Calu3 (cell line): ENCODE measurements at regions of chr7 and their contacts with region 1.

Region 1: GRCh38 chr7:35185907-35186731 is 67.8 kb downstream of the TBX20 start:
- DNase-seq: peak; percentile 68
- H3K4me3 Mint-ChIP-seq: peak overlapping the region; percentile 91
- H3K27ac Mint-ChIP-seq: peak overlapping the region; percentile 22
- H3K4me1 Mint-ChIP-seq: peaks cover 27% of the 10 kb centered on the region
- H3K27me3 Mint-ChIP-seq: peaks cover 37% of the 10 kb centered on the region
- CTCF ChIP-seq: peak; percentile 48

Region 2: DNA sequence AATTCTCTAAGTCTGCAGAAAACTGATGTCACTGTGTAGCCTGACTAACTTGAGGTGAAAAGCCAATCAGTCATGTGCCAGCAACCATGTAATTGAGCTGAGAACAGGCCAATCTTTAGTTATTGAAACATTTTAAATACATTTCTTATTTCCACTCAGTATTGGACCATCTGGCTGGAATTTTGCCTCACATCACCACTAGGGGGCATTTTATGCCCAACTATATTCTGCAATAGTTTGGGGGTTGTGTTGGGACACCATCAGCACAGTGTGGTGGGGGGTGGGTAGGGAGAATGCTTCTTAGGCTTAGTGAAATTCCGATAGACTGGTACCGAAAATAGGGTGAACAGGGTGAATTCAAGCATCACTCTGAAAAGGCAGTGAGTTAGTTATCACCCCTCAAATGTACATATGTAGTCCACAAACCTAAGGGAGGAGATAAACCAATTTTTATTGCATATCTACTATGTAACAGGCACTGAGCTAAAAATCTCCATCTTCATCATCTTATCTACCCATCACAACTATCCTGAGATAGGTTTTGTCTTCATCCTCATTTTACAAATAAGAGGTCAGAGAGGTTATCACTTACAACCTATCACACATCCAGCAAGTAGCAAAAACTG is 510.3 kb before region 1 on chr7:
- CTCF ChIA-PET with region 1: no interaction called
- intact Hi-C with region 1: loop called (anchors 10 kb)
- DNase-seq: peak; percentile 66
- H3K4me3 Mint-ChIP-seq: no peak overlapping the region
- H3K27ac Mint-ChIP-seq: no peak overlapping the region
- H3K4me1 Mint-ChIP-seq: peaks cover 24% of the 10 kb centered on the region
- H3K27me3 Mint-ChIP-seq: no peaks in the 10 kb centered on the region
- CTCF ChIP-seq: peak; percentile 85

Region 3: DNA sequence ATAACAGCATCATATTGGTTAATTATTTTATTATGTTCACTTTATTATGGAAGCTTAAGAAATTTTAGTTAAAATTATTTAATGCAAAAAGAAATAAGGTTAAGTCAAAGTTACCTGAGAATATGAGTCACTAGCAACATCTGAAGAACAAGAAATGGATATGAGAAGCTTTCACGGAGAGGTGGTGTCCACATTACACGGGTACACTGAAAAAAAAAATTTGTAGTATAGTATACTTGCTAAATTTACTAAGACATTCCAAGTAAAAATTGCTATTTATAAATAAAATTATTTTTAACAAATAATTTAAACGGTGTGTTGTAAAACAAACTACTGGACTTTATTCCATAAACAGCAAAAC is 212.7 kb before region 1 on chr7:
- CTCF ChIA-PET with region 1: no interaction called
- intact Hi-C with region 1: no loop called
- DNase-seq: no peak
- H3K4me3 Mint-ChIP-seq: no peak overlapping the region
- H3K27ac Mint-ChIP-seq: no peak overlapping the region
- H3K4me1 Mint-ChIP-seq: no peaks in the 10 kb centered on the region
- H3K27me3 Mint-ChIP-seq: no peaks in the 10 kb centered on the region
- CTCF ChIP-seq: no peak

Region 4: GRCh38 chr7:35519971-35520809 is 334.1 kb after region 1 on chr7:
- CTCF ChIA-PET with region 1: interaction called, 4 read pairs
- intact Hi-C with region 1: loop called (anchors 5 kb)
- DNase-seq: peak; percentile 86
- H3K4me3 Mint-ChIP-seq: no peak overlapping the region
- H3K27ac Mint-ChIP-seq: no peak overlapping the region
- H3K4me1 Mint-ChIP-seq: no peaks in the 10 kb centered on the region
- H3K27me3 Mint-ChIP-seq: peaks cover 87% of the 10 kb centered on the region
- CTCF ChIP-seq: peak; percentile 98

Region 5: GRCh38 chr7:35537067-35538023 is 351.2 kb after region 1 on chr7:
- CTCF ChIA-PET with region 1: no interaction called
- intact Hi-C with region 1: loop called (anchors 2 kb)
- DNase-seq: peak; percentile 89
- H3K4me3 Mint-ChIP-seq: peak overlapping the region; percentile 58
- H3K27ac Mint-ChIP-seq: no peak overlapping the region
- H3K4me1 Mint-ChIP-seq: no peaks in the 10 kb centered on the region
- H3K27me3 Mint-ChIP-seq: peaks cover 54% of the 10 kb centered on the region
- CTCF ChIP-seq: peak; percentile 98

Region 6: GRCh38 chr7:35624299-35625186 is 438.4 kb after region 1 on chr7:
- CTCF ChIA-PET with region 1: no interaction called
- intact Hi-C with region 1: loop called (anchors 5 kb)
- DNase-seq: peak; percentile 68
- H3K4me3 Mint-ChIP-seq: no peak overlapping the region
- H3K27ac Mint-ChIP-seq: no peak overlapping the region
- H3K4me1 Mint-ChIP-seq: no peaks in the 10 kb centered on the region
- H3K27me3 Mint-ChIP-seq: no peaks in the 10 kb centered on the region
- CTCF ChIP-seq: peak; percentile 86